ENCODE measurements at regions of chr10 and their contacts with region 1.

Region 1: GRCh38 chr10:100743626-100744135 is 1.7 kb upstream of the PAX2 start:
- DNase-seq: peak; percentile 80
- ATAC-seq: peak; percentile 69
- H3K4me3 ChIP-seq: no peak overlapping the region
- H3K27ac ChIP-seq: no peak overlapping the region
- H3K4me1 ChIP-seq: peaks cover 8 to 31% of the 10 kb centered on the region in 2 experiments; a peak in 3 of 4 replicates
- H3K27me3 ChIP-seq: no peaks in the 10 kb centered on the region
- CTCF ChIP-seq: peak; percentile 98 to 99 (median 98)
- POLR2A ChIP-seq: no peak
- RAD21 ChIP-seq: peak; percentile 98

Region 2: DNA sequence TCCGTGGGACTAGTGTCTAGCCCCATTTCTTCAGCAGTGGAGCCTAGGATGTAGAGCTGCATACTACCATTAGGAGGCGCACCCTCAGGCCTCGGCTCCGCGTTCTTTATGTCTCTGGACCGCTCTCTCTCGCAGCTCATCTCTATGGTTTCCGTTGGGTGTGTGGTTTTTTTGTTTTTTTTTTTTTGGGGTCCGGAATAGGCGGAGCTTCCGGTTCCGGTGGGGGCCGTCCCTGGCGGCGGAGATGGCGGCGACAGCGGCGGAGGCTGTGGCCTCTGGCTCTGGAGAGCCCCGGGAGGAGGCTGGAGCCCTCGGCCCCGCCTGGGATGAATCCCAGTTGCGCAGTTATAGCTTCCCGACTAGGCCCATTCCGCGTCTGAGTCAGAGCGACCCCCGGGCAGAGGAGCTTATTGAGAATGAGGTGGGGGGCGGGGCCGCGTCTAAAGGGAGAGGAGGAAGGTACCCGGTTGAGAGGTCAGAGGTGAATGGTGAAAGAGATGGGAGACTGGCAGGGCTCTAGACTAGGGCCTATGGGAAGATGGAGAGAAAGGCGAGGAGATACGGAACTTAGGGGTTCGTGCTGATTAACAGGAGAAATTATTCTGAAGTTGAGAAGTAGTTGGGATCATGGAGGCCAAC is 207.8 kb before region 1 on chr10 and contains the start of gene HIF1AN:
- CTCF ChIA-PET with region 1: interaction called, 11 read pairs
- POLR2A ChIA-PET with region 1: interaction called, 3 read pairs
- RAD21 ChIA-PET with region 1: no interaction called
- intact Hi-C with region 1: no loop called
- DNase-seq: peak; percentile 97
- ATAC-seq: peak; percentile 99
- H3K4me3 ChIP-seq: peak within 1 kb of the TSS; percentile 79 to 83
- H3K27ac ChIP-seq: peak within 1 kb of the TSS; percentile 14; the same call in 1 of the 2 replicates
- H3K4me1 ChIP-seq: peaks cover 10 to 17% of the 10 kb centered on the region in 2 experiments
- H3K27me3 ChIP-seq: no peaks in the 10 kb centered on the region
- CTCF ChIP-seq: peak; percentile 80 to 99 (median 97)
- POLR2A ChIP-seq: peak; percentile 92
- RAD21 ChIP-seq: no peak
- total RNA-seq, gene HIF1AN: 67.2 TPM

Region 3: GRCh38 chr10:100569618-100570473 is 173.8 kb before region 1 on chr10:
- CTCF ChIA-PET with region 1: interaction called, 27 read pairs
- POLR2A ChIA-PET with region 1: interaction called, 6 read pairs
- RAD21 ChIA-PET with region 1: interaction called in 1 of 2 experiments, 3 read pairs
- intact Hi-C with region 1: no loop called
- DNase-seq: peak; percentile 37
- ATAC-seq: peak; percentile 87
- H3K4me3 ChIP-seq: peak overlapping the region; percentile 71 to 76
- H3K27ac ChIP-seq: peak overlapping the region; percentile 24; the same call in 1 of the 2 replicates
- H3K4me1 ChIP-seq: peaks cover 0 to 13% of the 10 kb centered on the region in 2 experiments; a peak in 2 of 4 replicates
- H3K27me3 ChIP-seq: no peaks in the 10 kb centered on the region
- CTCF ChIP-seq: peak; percentile 86 to 96 (median 95)
- POLR2A ChIP-seq: peak; percentile 55
- RAD21 ChIP-seq: peak; percentile 52

Region 4: GRCh38 chr10:100670828-100671479 is 72.7 kb before region 1 on chr10:
- CTCF ChIA-PET with region 1: interaction called, 5 read pairs
- POLR2A ChIA-PET with region 1: no interaction called
- RAD21 ChIA-PET with region 1: interaction called, 8 to 9 read pairs
- intact Hi-C with region 1: loop called (anchors 1 kb)
- DNase-seq: no peak
- ATAC-seq: peak; percentile 95
- H3K4me3 ChIP-seq: peak overlapping the region; percentile 39 to 56
- H3K27ac ChIP-seq: no peak overlapping the region
- H3K4me1 ChIP-seq: peaks cover 6 to 10% of the 10 kb centered on the region in 2 experiments
- H3K27me3 ChIP-seq: peaks cover 22% of the 10 kb centered on the region
- CTCF ChIP-seq: peak; percentile 56 to 92 (median 83); a peak in 5 of 6 replicates
- POLR2A ChIP-seq: no peak
- RAD21 ChIP-seq: peak; percentile 58

Region 5: GRCh38 chr10:100683545-100684300 is 60.0 kb before region 1 on chr10:
- CTCF ChIA-PET with region 1: no interaction called
- POLR2A ChIA-PET with region 1: no interaction called
- RAD21 ChIA-PET with region 1: no interaction called
- intact Hi-C with region 1: no loop called
- DNase-seq: no peak
- ATAC-seq: no peak
- H3K4me3 ChIP-seq: no peak overlapping the region
- H3K27ac ChIP-seq: no peak overlapping the region
- H3K4me1 ChIP-seq: no peaks in the 10 kb centered on the region
- H3K27me3 ChIP-seq: peaks cover 86% of the 10 kb centered on the region
- CTCF ChIP-seq: no peak
- POLR2A ChIP-seq: no peak
- RAD21 ChIP-seq: no peak

Region 6: DNA sequence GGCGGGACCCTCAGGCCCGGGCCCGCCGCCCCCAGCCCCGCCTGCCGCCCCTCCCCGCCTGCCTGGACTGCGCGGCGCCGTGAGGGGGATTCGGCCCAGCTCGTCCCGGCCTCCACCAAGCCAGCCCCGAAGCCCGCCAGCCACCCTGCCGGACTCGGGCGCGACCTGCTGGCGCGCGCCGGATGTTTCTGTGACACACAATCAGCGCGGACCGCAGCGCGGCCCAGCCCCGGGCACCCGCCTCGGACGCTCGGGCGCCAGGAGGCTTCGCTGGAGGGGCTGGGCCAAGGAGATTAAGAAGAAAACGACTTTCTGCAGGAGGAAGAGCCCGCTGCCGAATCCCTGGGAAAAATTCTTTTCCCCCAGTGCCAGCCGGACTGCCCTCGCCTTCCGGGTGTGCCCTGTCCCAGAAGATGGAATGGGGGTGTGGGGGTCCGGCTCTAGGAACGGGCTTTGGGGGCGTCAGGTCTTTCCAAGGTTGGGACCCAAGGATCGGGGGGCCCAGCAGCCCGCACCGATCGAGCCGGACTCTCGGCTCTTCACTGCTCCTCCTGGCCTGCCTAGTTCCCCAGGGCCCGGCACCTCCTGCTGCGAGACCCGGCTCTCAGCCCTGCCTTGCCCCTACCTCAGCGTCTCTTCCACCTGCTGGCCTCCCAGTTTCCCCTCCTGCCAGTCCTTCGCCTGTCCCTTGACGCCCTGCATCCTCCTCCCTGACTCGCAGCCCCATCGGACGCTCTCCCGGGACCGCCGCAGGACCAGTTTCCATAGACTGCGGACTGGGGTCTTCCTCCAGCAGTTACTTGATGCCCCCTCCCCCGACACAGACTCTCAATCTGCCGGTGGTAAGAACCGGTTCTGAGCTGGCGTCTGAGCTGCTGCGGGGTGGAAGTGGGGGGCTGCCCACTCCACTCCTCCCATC is 84.4 kb after region 1 on chr10:
- CTCF ChIA-PET with region 1: no interaction called
- POLR2A ChIA-PET with region 1: no interaction called
- RAD21 ChIA-PET with region 1: interaction called in 1 of 2 experiments, 3 read pairs
- intact Hi-C with region 1: loop called (anchors 5 kb)
- DNase-seq: no peak
- ATAC-seq: peak; percentile 66
- H3K4me3 ChIP-seq: peak overlapping the region; percentile 51 to 70
- H3K27ac ChIP-seq: peak overlapping the region; percentile 54; the same call in 1 of the 2 replicates
- H3K4me1 ChIP-seq: peaks cover 12 to 30% of the 10 kb centered on the region in 2 experiments; a peak in 3 of 4 replicates
- H3K27me3 ChIP-seq: peaks cover 6% of the 10 kb centered on the region; the same call in 1 of the 2 replicates
- CTCF ChIP-seq: peak in 1 of 3 experiments; percentile 17; a peak in 1 of 6 replicates
- POLR2A ChIP-seq: no peak
- RAD21 ChIP-seq: no peak; the same call in 1 of the 2 replicates

Region 7: GRCh38 chr10:100858747-100859483 is 115.2 kb after region 1 on chr10:
- CTCF ChIA-PET with region 1: no interaction called
- POLR2A ChIA-PET with region 1: no interaction called
- RAD21 ChIA-PET with region 1: no interaction called
- intact Hi-C with region 1: no loop called
- DNase-seq: no peak
- ATAC-seq: no peak
- H3K4me3 ChIP-seq: no peak overlapping the region
- H3K27ac ChIP-seq: no peak overlapping the region
- H3K4me1 ChIP-seq: no peaks in the 10 kb centered on the region
- H3K27me3 ChIP-seq: peaks cover 18% of the 10 kb centered on the region; the same call in 1 of the 2 replicates
- CTCF ChIP-seq: no peak
- POLR2A ChIP-seq: no peak
- RAD21 ChIP-seq: no peak